Activated naive CD8-positive, alpha-beta T cell treated with anti-CD3 and anti-CD28 coated beads, Interleukin-2, amount 10 ng/mL, durations not matched to agents 7 days and 5 days (primary cell): ENCODE measurements at regions of chr3 and their contacts with region 1.

Region 1: DNA sequence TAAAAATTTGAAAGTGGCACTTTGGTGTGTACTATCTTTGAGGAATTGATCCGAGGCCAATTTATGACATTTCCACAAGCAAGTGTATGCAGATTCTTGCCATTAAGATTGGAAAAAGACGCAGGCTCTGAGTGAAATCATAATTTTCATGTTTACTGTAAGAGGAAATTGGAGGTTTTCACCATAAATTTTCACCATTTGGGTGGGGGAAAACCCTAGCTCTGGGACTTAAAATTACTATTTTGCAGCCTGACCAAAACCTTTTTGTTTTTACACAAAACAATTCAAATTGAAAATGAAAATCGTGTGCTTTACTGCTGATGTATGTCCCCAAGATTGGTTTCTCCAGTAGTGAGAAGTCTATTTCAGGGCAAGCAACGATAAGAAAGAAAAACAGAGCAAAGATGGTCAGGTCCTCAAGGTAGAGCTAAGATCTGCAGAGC is 282.6 kb downstream of the FOXP1 start:
- DNase-seq: no peak
- ATAC-seq: peak; percentile 38
- H3K4me3 Mint-ChIP-seq: peak overlapping the region; percentile 90
- H3K27ac Mint-ChIP-seq: peak overlapping the region; percentile 97
- H3K4me1 Mint-ChIP-seq: peaks cover 54% of the 10 kb centered on the region
- H3K27me3 Mint-ChIP-seq: no peaks in the 10 kb centered on the region

Region 2: GRCh38 chr3:71130471-71131374 is 170.2 kb before region 1 on chr3:
- POLR2A ChIA-PET with region 1: interaction called, 11 read pairs
- DNase-seq: peak; percentile 60
- ATAC-seq: peak; percentile 75
- H3K4me3 Mint-ChIP-seq: peak overlapping the region; percentile 86
- H3K27ac Mint-ChIP-seq: peak overlapping the region; percentile 95
- H3K4me1 Mint-ChIP-seq: peaks cover 50% of the 10 kb centered on the region
- H3K27me3 Mint-ChIP-seq: no peaks in the 10 kb centered on the region

Region 3: DNA sequence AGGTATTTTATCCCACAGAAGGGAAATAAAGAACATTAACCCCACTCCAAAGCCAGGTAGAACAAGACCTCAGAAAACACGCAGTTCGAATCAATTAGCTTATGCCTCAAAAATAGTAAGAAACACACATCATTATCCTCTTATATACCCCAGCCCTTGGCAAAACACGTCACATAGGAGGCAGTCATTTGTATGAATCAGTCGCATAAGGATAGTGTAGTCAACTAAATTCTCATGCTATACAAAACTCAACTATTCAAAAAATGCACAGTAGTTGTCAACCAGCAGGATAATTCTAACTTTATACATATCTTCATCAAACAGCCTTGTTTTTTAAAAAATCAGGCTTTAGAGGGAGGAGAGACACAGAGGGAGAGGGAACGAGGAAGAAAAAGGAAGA is 15.9 kb before region 1 on chr3:
- POLR2A ChIA-PET with region 1: no interaction called
- DNase-seq: no peak
- ATAC-seq: no peak
- H3K4me3 Mint-ChIP-seq: no peak overlapping the region
- H3K27ac Mint-ChIP-seq: no peak overlapping the region
- H3K4me1 Mint-ChIP-seq: peaks cover 15% of the 10 kb centered on the region
- H3K27me3 Mint-ChIP-seq: no peaks in the 10 kb centered on the region

Region 4: GRCh38 chr3:71415681-71416131 is 114.7 kb after region 1 on chr3:
- POLR2A ChIA-PET with region 1: no interaction called
- DNase-seq: no peak
- ATAC-seq: no peak
- H3K4me3 Mint-ChIP-seq: peak overlapping the region; percentile 80
- H3K27ac Mint-ChIP-seq: peak overlapping the region; percentile 93
- H3K4me1 Mint-ChIP-seq: peaks cover 56% of the 10 kb centered on the region
- H3K27me3 Mint-ChIP-seq: no peaks in the 10 kb centered on the region